Esophagus muscularis mucosa (tissue), 4 donors: ENCODE measurements at regions of chr11 and their contacts with region 1.

Region 1: GRCh38 chr11:130390071-130390758 is 38.2 kb downstream of the ADAMTS8 start:
- DNase-seq: no peak
- H3K4me3 ChIP-seq: no peak overlapping the region
- H3K27ac ChIP-seq: peak overlapping the region; percentile 67 to 83 (median 78)
- H3K4me1 ChIP-seq: peaks cover 8 to 45% (median 41%) of the 10 kb centered on the region in 4 donors
- H3K27me3 ChIP-seq: no peaks in the 10 kb centered on the region
- CTCF ChIP-seq: peak; percentile 51 to 65 (median 58)
- EP300 ChIP-seq: peak; percentile 85
- POLR2A ChIP-seq: no peak

Region 2: DNA sequence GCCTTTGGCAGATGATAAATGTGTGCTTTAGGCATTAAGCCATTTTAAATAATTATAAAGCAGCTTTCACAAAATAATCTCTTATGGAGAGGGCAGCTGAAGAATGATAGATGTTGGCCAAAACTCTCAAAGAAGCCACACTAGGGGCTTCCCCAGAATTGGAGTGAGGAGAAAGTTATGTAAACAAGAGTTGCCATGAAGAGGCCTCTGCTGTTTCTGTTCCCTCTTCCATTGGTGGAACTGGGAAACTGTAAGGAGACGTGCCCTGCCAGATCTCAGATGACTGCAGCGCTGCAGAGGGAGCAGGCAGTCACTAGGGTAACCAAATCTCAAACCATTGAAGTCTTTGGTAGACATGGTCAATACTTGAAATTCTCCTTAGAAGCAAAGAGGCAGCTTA is 340.0 kb before region 1 on chr11:
- intact Hi-C with region 1: no loop called
- DNase-seq: no peak
- H3K4me3 ChIP-seq: no peak overlapping the region
- H3K27ac ChIP-seq: peak overlapping the region; percentile 2 to 58 (median 57)
- H3K4me1 ChIP-seq: peaks cover 0 to 29% (median 23%) of the 10 kb centered on the region in 4 donors
- H3K27me3 ChIP-seq: no peaks in the 10 kb centered on the region
- CTCF ChIP-seq: no peak
- EP300 ChIP-seq: no peak
- POLR2A ChIP-seq: no peak

Region 3: DNA sequence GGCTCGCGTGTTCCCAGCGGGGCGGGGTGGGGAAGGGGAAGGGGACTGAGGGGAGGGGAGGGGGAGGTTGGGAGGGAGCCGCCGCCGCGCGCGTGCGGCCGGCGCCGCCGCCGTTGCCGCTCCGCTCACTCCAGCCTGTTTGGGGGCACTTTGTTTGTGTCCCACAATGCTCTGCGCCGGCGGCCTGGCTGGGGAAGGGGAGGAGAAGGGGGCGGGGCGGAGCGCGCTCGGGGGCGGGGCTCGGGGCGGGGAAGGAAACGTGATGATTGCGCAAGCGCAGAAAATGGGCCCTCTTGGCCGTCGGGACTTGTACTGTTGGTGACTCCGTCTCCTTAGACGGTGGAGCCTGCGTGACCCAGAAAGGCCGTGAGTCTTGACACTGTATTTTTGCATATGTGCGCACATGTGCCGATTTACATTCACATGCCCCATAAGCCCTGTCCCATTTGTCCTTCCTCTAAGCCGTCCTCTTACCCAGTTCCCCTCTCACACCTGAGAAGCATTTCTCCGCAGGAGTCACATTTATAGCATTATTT is 75.4 kb before region 1 on chr11 and contains the start of gene ZBTB44:
- intact Hi-C with region 1: loop called (anchors 5 kb)
- DNase-seq: peak; percentile 98
- H3K4me3 ChIP-seq: peak within 1 kb of the TSS; percentile 74 to 98 (median 89)
- H3K27ac ChIP-seq: peak within 1 kb of the TSS; percentile 94 to 96 (median 96)
- H3K4me1 ChIP-seq: peaks cover 26 to 41% (median 36%) of the 10 kb centered on the region in 4 donors
- H3K27me3 ChIP-seq: no peaks in the 10 kb centered on the region
- CTCF ChIP-seq: no peak
- EP300 ChIP-seq: no peak
- POLR2A ChIP-seq: no peak
- total RNA-seq, gene ZBTB44: 50.4 to 86.4 (median 65.3) TPM

Region 4: GRCh38 chr11:130427581-130428315 is 37.5 kb after region 1 on chr11:
- intact Hi-C with region 1: loop called (anchors 2 kb)
- DNase-seq: no peak
- H3K4me3 ChIP-seq: peak overlapping the region; percentile 61 to 74 (median 64)
- H3K27ac ChIP-seq: peak overlapping the region; percentile 57 to 78 (median 68)
- H3K4me1 ChIP-seq: peaks cover 21 to 53% (median 49%) of the 10 kb centered on the region in 4 donors
- H3K27me3 ChIP-seq: peaks cover 0 to 19% (median 0%) of the 10 kb centered on the region in 4 donors
- CTCF ChIP-seq: peak; percentile 37 to 45 (median 41)
- EP300 ChIP-seq: no peak
- POLR2A ChIP-seq: no peak